Left colon (tissue), 2 donors: ENCODE measurements at regions of chr20 and their contacts with region 1.

Region 1: DNA sequence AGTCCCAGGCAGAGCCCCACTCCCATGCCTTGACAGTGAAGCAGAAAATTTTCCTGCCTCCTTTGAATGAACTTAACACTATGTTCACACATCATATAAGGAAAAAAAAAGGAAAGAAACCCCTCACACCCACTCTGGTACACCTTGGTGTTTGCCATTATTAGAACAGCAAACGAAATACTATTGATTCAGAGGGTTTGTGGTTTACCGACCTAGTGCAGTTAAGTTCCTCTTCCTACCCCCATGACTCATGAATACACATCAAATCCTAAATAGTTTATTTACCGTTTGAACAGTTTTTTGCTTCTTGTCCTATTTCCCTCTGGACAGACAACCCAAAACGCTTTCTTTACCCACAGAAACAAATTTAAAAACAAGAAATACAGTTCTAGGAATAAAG is 237.7 kb downstream of the FOXA2 start:
- DNase-seq: no peak
- ATAC-seq: no peak

Region 2: GRCh38 chr20:22180244-22180643 is 166.5 kb before region 1 on chr20:
- intact Hi-C with region 1: no loop called
- DNase-seq: no peak
- ATAC-seq: no peak

Region 3: GRCh38 chr20:22586645-22587310 is 240.1 kb after region 1 on chr20:
- intact Hi-C with region 1: loop called in 1 of 2 experiments (anchors 10 kb)
- DNase-seq: peak; percentile 47 to 82
- ATAC-seq: peak; percentile 18